PC-9 (cell line): ENCODE measurements at regions of chr18 and their contacts with region 1.

Region 1: GRCh38 chr18:47050468-47050867 is 15.0 kb upstream of the ELOA2 start:
- DNase-seq: peak; percentile 3 to 40
- H3K4me3 ChIP-seq: no peak overlapping the region
- H3K27ac ChIP-seq: no peak overlapping the region
- H3K4me1 ChIP-seq: no peaks in the 10 kb centered on the region
- H3K27me3 ChIP-seq: no peaks in the 10 kb centered on the region; the same call in 1 of the 2 replicates
- CTCF ChIP-seq: peak; percentile 77

Region 2: DNA sequence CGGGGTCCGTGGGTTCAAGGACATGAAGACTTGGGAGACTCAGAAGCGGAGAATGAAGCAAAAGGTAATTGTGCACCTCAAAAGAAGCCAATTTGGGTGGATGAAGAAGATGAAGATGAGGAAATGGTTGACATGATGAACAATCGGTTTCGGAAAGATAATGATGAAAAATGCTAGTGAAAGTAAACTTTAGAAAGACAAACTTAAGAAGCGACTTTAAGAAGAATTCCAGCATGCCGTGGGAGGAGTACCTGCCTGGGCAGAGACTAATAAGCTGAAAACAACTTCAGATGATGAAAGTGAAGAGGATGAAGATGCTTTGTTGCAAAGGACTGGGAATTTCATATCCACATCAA is 1022.0 kb before region 1 on chr18:
- CTCF ChIA-PET with region 1: no interaction called
- POLR2A ChIA-PET with region 1: no interaction called
- intact Hi-C with region 1: no loop called
- DNase-seq: no peak
- H3K4me3 ChIP-seq: no peak overlapping the region
- H3K27ac ChIP-seq: no peak overlapping the region
- H3K4me1 ChIP-seq: no peaks in the 10 kb centered on the region
- H3K27me3 ChIP-seq: no peaks in the 10 kb centered on the region
- CTCF ChIP-seq: no peak

Region 3: GRCh38 chr18:46761059-46761769 is 289.3 kb before region 1 on chr18:
- CTCF ChIA-PET with region 1: no interaction called
- POLR2A ChIA-PET with region 1: no interaction called
- intact Hi-C with region 1: no loop called
- DNase-seq: no peak
- H3K4me3 ChIP-seq: no peak overlapping the region
- H3K27ac ChIP-seq: no peak overlapping the region
- H3K4me1 ChIP-seq: no peaks in the 10 kb centered on the region
- H3K27me3 ChIP-seq: peaks cover 46% of the 10 kb centered on the region
- CTCF ChIP-seq: no peak

Region 4: DNA sequence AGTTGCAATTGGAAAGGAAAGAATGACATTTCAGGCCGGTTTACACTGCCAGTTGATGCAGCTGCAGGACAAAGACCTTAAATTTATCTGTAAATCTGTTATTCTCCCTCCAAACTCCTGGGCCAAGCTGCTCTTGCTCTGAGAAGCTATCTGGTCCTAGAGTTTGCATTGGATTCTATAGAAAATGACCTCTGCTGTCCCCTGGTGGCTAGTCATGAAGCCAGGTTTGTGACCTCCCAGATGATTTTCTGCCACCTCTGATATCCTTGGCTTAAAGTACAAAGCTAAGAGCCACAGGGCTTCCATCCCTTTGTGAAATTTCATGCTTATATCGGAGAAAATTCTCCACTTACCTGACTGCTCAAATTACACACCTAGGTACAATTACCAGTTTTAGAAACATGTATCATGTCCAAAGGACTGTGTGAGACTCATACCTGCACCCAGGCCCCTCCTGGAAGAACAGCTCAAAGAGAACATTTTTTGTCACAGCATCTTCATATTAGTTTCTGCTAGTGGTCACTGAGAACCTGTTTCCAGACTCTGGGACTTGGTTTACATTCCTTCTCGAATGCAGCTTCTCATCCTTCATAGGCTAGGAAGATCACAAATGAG is 154.5 kb after region 1 on chr18:
- CTCF ChIA-PET with region 1: interaction called, 3 read pairs
- POLR2A ChIA-PET with region 1: no interaction called
- intact Hi-C with region 1: loop called (anchors 1 kb)
- DNase-seq: peak in 1 of 2 experiments; percentile 14
- H3K4me3 ChIP-seq: no peak overlapping the region
- H3K27ac ChIP-seq: no peak overlapping the region
- H3K4me1 ChIP-seq: no peaks in the 10 kb centered on the region
- H3K27me3 ChIP-seq: peaks cover 28% of the 10 kb centered on the region
- CTCF ChIP-seq: peak; percentile 79

Region 5: DNA sequence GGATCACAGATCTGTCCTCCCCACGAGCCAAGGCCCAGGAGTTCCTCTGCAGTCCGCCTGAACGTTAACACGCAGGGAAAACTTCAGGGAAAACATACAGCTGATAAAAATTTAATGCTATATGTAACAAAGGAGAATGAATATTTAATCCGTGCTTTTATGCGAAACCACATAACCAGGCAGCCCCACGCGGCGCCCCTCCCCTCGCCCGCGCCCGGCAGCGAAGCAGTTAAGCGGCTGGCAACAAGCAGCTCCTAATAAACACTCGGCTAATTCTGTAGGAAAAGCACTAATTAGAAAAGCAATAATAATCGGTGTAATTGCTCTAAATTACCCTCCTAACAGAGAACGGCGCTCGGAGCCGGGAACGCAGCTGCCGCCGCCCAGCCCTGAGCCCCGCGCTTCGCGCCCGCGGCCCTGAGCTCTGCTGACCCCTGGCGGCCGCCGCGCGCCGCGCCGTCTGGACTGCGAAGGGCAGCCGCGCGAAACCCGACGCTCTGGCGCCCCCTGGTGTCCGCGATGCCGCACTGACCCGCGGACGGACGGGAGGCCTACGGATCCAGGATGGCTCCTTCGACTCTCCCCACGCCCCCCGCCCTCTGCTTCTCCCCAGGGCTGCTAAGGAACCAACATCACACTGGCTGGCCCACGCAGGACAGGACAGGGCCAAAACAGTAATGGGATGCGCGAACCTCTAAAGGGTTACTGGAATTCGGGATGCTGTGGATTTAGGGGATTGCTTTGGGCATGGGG is 698.6 kb after region 1 on chr18:
- CTCF ChIA-PET with region 1: no interaction called
- POLR2A ChIA-PET with region 1: no interaction called
- intact Hi-C with region 1: loop called (anchors 5 kb)
- DNase-seq: peak in 1 of 2 experiments; percentile 65
- H3K4me3 ChIP-seq: no peak overlapping the region
- H3K27ac ChIP-seq: no peak overlapping the region
- H3K4me1 ChIP-seq: no peaks in the 10 kb centered on the region
- H3K27me3 ChIP-seq: peaks cover 42% of the 10 kb centered on the region
- CTCF ChIP-seq: peak; percentile 84